Heart right ventricle (tissue), 16 donors: ENCODE measurements at regions of chr13 and their contacts with region 1.

Region 1: DNA sequence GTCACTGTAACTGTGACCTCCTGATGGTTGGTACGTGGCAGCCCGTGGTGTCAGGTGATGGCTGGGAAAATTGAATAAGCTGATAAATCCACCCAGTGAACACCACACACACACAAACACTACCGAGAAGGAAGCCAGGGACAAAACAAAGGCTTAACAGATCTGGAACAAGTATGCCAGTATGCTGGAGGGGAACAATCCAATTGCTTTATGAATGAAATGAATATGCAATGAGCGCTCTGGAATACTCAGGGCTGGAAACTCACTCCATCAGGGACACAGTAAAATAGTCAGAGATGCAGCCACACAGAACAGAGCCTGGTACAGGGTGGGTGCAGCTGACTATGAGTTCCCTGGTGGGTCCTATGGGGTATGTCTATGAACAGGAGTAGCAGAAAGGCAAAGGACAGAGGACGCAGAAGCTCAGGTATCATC is 16.7 kb downstream of the TMTC4 start:
- DNase-seq: no peak
- ATAC-seq: no peak
- H3K4me3 ChIP-seq: no peak overlapping the region
- H3K27ac ChIP-seq: no peak overlapping the region
- H3K4me1 ChIP-seq: peaks cover 0 to 10% (median 0%) of the 10 kb centered on the region in 9 donors
- H3K27me3 ChIP-seq: no peaks in the 10 kb centered on the region
- CTCF ChIP-seq: no peak

Region 2: DNA sequence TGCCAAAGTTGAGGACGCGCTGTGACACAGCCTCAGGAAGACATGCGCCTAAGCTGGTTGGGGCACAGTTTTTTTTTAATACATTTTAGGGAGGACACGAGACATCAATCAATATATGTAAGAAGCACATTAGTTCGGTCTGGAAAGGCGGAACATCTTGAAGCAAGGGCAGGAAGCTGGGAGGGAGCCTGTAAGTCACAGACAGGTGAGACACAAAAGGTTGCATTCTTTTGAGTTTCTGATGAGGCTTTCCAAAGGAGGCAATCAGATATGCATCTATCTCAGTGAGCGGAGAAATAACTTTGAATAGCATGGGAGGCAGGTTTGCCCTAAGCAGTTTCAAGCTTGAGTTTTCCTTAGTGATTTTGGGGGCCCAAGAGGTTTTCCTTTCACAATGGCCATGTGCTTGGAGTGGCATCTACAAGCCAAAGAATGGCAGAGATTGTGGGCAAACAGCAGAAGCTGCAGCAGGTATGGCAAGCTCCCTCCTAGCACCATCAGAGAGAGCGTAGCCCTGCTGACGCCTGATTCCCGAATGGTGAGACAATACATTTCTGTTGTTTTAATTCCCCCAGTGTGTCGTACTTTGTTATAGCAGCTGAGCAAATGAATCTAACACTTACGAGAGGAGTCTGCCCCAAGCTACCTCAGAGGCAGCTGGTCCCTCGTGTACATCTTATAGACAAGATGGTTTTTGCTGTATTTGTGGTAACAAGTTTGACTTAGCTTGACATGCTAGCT is 116.2 kb after region 1 on chr13:
- intact Hi-C with region 1: loop called in 1 of 10 experiments (anchors 2 kb)
- DNase-seq: no peak
- ATAC-seq: no peak
- H3K4me3 ChIP-seq: no peak overlapping the region
- H3K27ac ChIP-seq: no peak overlapping the region
- H3K4me1 ChIP-seq: no peaks in the 10 kb centered on the region
- H3K27me3 ChIP-seq: no peaks in the 10 kb centered on the region
- CTCF ChIP-seq: no peak

Region 3: GRCh38 chr13:101109005-101109404 is 451.1 kb after region 1 on chr13:
- intact Hi-C with region 1: no loop called
- DNase-seq: no peak
- ATAC-seq: no peak
- H3K4me3 ChIP-seq: no peak overlapping the region
- H3K27ac ChIP-seq: no peak overlapping the region
- H3K4me1 ChIP-seq: peaks cover 0 to 4% (median 0%) of the 10 kb centered on the region in 9 donors
- H3K27me3 ChIP-seq: no peaks in the 10 kb centered on the region
- CTCF ChIP-seq: no peak

Region 4: GRCh38 chr13:101258071-101258470 is 600.2 kb after region 1 on chr13:
- intact Hi-C with region 1: no loop called
- DNase-seq: no peak
- ATAC-seq: no peak
- H3K4me3 ChIP-seq: no peak overlapping the region
- H3K27ac ChIP-seq: no peak overlapping the region
- H3K4me1 ChIP-seq: peaks cover 0 to 3% (median 0%) of the 10 kb centered on the region in 9 donors
- H3K27me3 ChIP-seq: no peaks in the 10 kb centered on the region
- CTCF ChIP-seq: no peak